Esophagus muscularis mucosa (tissue), 4 donors: ENCODE measurements at regions of chr12 and their contacts with region 1.

Region 1: DNA sequence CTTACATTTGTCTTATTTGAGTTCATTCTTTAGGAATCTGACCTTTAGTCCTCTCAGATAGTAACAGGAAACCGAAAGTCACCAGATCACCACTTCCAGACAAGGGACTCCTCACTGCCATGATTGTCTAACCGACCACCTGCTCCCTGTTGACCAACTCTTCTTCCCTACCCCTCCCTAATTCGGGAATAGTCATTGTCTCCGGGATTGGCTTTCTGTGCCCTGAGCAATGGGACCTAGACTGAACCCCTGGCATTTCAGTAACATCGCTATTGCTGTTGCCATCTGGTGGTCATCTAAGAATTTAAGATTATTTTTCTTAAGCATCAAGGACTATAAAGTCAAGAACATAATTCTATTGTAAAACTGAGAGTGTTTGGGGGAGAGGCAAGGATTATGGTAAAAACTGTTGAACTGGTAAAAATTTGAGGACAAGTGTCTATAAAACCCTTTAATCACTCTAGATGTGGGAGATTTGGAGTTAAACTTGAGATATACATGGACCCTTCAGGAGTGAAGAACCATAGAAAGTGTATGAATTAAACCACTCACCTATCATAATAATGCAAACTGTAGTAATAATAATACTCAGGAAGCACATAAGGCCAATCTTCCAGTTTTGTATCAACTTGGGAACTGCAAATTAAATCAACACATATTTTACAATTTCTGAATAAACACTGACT is 6.3 kb downstream of the CLEC2A start:
- DNase-seq: no peak
- H3K4me3 ChIP-seq: peak overlapping the region in 2 of 4 donors; percentile 21 to 41
- H3K27ac ChIP-seq: no peak overlapping the region
- H3K4me1 ChIP-seq: no peaks in the 10 kb centered on the region
- H3K27me3 ChIP-seq: no peaks in the 10 kb centered on the region
- CTCF ChIP-seq: peak in 2 of 3 experiments; percentile 30 to 32
- EP300 ChIP-seq: no peak
- POLR2A ChIP-seq: no peak

Region 2: DNA sequence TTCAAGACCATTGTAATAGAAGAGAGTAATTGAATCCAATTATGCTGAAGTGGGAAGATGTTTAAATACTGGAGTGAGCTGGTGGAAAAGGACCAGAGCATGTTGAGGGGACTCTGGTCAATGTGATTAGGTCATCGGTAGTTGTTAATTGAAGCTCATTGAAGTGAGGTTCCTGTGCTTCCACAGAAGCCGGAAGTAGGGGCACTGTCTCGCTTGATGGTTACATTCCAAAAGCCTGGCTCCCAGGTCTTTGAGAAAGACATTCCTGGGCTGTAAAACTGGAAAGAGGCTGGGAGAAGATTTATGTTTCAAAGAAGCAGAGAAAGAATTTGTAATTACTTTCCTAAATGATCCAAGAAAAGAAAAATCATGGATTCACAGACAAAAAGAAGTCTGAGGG is 180.7 kb before region 1 on chr12:
- intact Hi-C with region 1: loop called (anchors 5 kb)
- DNase-seq: no peak
- H3K4me3 ChIP-seq: no peak overlapping the region
- H3K27ac ChIP-seq: no peak overlapping the region
- H3K4me1 ChIP-seq: peaks cover 0 to 6% (median 2%) of the 10 kb centered on the region in 4 donors
- H3K27me3 ChIP-seq: peaks cover 0 to 10% (median 0%) of the 10 kb centered on the region in 4 donors
- CTCF ChIP-seq: no peak
- EP300 ChIP-seq: no peak
- POLR2A ChIP-seq: no peak

Region 3: GRCh38 chr12:9813821-9814809 is 111.7 kb before region 1 on chr12:
- intact Hi-C with region 1: loop called (anchors 10 kb)
- DNase-seq: no peak
- H3K4me3 ChIP-seq: peak overlapping the region in 3 of 4 donors; percentile 28 to 30 (median 29)
- H3K27ac ChIP-seq: no peak overlapping the region
- H3K4me1 ChIP-seq: no peaks in the 10 kb centered on the region
- H3K27me3 ChIP-seq: peaks cover 0 to 11% (median 0%) of the 10 kb centered on the region in 4 donors
- CTCF ChIP-seq: peak in 2 of 3 experiments; percentile 23 to 64
- EP300 ChIP-seq: no peak
- POLR2A ChIP-seq: no peak